ENCODE measurements at regions of chr19 and their contacts with region 1.

Region 1: GRCh38 chr19:58352760-58353671 is at the start of gene A1BG:
- DNase-seq: no peak
- ATAC-seq: no peak
- H3K4me3 Mint-ChIP-seq: no peak within 1 kb of the TSS
- H3K27ac Mint-ChIP-seq: peak within 1 kb of the TSS; percentile 61; the same call in 1 of the 2 replicates
- H3K4me1 Mint-ChIP-seq: peaks cover 5% of the 10 kb centered on the region
- H3K27me3 Mint-ChIP-seq: peaks cover 28% of the 10 kb centered on the region
- CTCF ChIP-seq: no peak
- total RNA-seq, gene A1BG: 22.6 to 24.3 TPM (median 23.4 TPM) in 3 replicates

Region 2: GRCh38 chr19:58252102-58252685 is 100.8 kb before region 1 on chr19:
- CTCF ChIA-PET with region 1: no interaction called
- POLR2A ChIA-PET with region 1: no interaction called
- DNase-seq: no peak
- ATAC-seq: no peak
- H3K4me3 Mint-ChIP-seq: no peak overlapping the region
- H3K27ac Mint-ChIP-seq: no peak overlapping the region
- H3K4me1 Mint-ChIP-seq: peaks cover 11% of the 10 kb centered on the region; the same call in 1 of the 2 replicates
- H3K27me3 Mint-ChIP-seq: peaks cover 27% of the 10 kb centered on the region
- CTCF ChIP-seq: no peak

Region 3: DNA sequence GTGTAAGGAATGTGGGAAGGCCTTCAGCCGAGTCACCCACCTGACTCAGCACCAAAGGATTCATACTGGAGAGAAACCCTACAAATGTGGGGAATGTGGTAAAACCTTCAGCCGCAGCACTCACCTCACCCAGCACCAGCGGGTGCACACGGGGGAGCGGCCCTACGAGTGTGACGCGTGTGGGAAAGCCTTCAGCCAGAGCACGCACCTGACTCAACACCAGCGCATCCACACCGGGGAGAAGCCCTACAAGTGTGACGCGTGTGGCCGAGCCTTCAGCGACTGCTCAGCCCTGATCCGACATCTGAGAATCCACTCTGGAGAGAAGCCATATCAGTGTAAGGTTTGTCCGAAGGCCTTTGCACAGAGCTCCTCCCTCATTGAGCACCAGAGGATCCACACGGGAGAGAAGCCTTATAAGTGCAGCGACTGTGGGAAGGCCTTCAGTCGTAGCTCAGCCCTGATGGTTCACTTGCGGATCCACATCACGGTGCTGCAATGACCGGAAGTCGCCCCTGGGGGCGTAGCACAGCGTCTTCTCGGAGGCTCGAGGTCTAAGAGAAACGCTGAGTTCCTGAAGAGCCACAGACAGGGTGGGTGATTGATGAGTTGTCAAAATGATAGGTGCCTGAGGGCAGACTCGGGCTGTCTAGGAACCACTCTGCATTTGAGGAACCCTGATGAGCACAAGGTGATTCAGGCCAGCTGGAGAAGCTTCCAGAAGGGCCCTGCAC is 14.0 kb before region 1 on chr19:
- CTCF ChIA-PET with region 1: interaction called, 19 read pairs
- POLR2A ChIA-PET with region 1: no interaction called
- DNase-seq: peak; percentile 73
- ATAC-seq: peak; percentile 91
- H3K4me3 Mint-ChIP-seq: no peak overlapping the region
- H3K27ac Mint-ChIP-seq: no peak overlapping the region
- H3K4me1 Mint-ChIP-seq: no peaks in the 10 kb centered on the region
- H3K27me3 Mint-ChIP-seq: peaks cover 3% of the 10 kb centered on the region; the same call in 1 of the 2 replicates
- CTCF ChIP-seq: peak; percentile 35

Region 4: DNA sequence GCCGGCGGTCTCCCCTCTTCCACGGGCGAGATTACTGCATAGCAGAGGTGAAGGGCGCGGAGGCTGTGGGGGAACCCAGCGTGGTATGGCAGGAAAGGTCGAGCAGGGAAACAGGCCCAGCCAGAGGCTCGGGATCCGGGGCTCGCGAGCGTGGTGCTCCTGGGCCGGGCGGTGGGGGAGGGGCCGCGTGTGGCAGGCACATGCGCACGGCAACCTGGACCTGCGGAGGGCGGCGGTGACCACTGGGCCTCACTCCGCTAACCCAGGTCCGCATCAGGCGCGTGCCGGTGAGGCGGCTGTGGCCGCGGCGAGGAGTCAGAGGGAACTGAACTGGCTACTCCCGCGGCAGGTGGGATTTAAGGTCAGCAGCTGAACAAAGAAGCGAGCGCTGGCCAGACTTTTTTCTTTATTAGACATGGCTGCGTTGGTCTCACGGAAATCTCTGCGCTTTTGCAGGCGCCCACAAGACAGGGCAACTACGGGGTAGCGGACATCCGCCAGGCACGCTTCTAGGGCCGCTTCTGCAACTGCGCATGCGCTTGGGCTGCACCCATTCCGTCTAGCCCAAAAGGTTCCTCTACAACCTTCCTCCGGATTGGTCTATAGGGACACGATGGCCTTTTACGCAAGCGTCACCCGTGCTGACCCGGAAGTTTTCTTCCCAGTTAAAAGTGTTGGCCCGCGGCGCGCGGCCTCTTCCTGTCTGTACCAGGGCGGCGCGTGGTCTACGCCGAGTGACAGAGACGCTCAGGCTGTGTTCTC is 33.7 kb after region 1 on chr19 and contains the start of gene RPS5:
- CTCF ChIA-PET with region 1: no interaction called
- POLR2A ChIA-PET with region 1: no interaction called
- DNase-seq: peak; percentile 92
- ATAC-seq: peak; percentile 88
- H3K4me3 Mint-ChIP-seq: peak within 1 kb of the TSS; percentile 96
- H3K27ac Mint-ChIP-seq: peak within 1 kb of the TSS; percentile 98
- H3K4me1 Mint-ChIP-seq: peaks cover 22% of the 10 kb centered on the region
- H3K27me3 Mint-ChIP-seq: no peaks in the 10 kb centered on the region
- CTCF ChIP-seq: no peak
- total RNA-seq, gene RPS5: 1,498 to 1,502 TPM (median 1,501 TPM) in 3 replicates

Measured in WTC11 (cell line).